KBM-7 (cell line): ENCODE measurements at regions of chr18 and their contacts with region 1.

Region 1: DNA sequence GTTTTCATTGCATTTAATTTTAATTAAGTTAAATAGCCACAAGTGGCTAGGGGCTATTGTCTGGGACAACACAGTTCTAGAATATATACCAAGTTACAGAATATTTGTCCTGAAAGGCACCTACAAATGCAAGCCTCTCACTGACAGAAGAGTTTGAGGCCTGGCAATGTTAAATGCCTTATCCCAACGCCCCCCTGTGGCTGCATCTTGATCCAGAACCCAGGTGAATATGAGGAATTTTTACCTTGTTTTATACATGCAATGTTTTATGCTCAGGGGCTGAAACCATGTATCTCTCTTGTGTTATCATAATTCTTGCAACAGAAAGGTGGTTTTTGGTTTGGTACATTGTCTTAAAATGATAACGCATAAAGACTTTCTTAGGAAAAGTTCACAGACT is 71.8 kb upstream of the SEC11C start:
- DNase-seq: peak; percentile 7

Region 2: DNA sequence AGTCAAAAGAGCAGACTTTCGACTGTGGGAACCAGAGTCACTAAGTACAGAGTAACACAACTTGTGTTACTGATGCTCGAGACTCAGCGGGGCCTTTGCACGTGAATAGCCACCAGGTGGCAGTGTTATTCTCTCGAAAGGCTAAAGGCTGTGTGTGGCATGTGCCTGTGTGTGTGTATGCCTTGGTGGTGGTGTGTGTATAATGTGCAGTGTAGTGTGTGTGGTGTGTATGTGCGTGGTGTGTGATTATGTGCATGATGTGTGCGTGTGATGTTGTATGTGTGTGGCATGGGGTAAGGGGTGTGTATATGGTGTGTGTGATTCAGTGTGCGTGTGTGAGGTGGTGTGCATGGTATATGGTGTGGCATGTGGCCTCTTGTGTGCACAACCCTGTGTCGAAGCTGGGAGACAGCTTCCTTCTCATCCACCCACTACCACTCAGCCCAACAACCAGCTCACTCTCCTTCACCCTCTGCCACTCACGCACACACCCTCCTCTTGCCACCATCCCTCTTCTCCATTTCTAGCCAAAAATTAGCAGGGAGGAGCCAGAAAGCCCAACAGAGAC is 286.2 kb before region 1 on chr18:
- in situ Hi-C with region 1: loop called (anchors 10 kb)
- DNase-seq: peak; percentile 69

Region 3: GRCh38 chr18:59293317-59293716 is 225.4 kb after region 1 on chr18:
- in situ Hi-C with region 1: no loop called
- DNase-seq: no peak